ENCODE measurements at regions of chr22 and their contacts with region 1.

Region 1: GRCh38 chr22:32781695-32782094 is 19.8 kb upstream of the TIMP3 start:
- DNase-seq: no peak
- H3K4me3 ChIP-seq: no peak overlapping the region
- H3K27ac ChIP-seq: no peak overlapping the region
- H3K4me1 ChIP-seq: peaks cover 2% of the 10 kb centered on the region
- H3K27me3 ChIP-seq: no peaks in the 10 kb centered on the region
- CTCF ChIP-seq: no peak

Region 2: DNA sequence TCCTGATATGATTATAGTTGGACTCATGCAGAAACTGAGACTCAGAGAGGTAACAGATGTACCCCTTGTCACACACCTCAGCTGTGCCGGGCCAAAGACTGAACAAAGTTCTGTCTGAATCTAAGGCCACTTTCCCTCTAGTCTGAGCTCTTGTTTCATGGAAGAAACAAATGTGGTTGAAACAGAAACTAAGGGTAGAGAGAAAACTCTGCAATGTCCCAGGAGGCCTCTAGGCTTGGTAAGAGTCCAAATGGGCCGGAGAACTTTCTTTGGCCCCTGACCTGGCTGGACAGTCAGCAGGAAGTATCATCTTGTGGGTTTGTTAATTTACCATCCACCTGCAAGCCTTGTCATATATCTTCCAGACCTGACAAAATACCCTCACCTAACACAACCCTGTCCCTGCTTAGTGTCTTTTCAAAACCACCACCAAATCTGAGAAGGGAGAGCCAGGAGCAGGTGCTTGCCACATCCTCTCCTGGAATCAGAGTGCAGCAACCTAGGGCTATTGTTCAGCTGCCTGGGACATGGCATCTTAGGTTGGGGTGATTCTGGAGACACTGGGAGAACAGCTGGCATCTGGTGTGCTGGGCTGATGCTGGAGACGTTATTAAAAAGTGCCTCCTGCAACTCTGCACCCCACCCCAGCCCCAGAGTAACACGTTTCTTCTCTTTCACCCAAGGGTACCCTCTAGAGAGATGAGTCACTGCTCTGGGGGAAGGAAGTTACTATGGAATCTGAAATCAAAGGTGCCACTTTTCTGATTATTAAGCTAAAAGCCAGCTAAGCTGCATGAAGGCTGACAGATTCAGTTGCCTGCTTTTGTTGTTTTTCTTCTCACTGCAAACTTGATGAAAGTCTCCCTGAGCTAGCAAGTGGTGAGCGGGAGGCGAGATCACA is 106.5 kb before region 1 on chr22:
- dilution Hi-C with region 1: no loop called
- DNase-seq: no peak
- H3K4me3 ChIP-seq: no peak overlapping the region
- H3K27ac ChIP-seq: no peak overlapping the region
- H3K4me1 ChIP-seq: peaks cover 4% of the 10 kb centered on the region
- H3K27me3 ChIP-seq: peaks cover 10% of the 10 kb centered on the region
- CTCF ChIP-seq: no peak

Region 3: DNA sequence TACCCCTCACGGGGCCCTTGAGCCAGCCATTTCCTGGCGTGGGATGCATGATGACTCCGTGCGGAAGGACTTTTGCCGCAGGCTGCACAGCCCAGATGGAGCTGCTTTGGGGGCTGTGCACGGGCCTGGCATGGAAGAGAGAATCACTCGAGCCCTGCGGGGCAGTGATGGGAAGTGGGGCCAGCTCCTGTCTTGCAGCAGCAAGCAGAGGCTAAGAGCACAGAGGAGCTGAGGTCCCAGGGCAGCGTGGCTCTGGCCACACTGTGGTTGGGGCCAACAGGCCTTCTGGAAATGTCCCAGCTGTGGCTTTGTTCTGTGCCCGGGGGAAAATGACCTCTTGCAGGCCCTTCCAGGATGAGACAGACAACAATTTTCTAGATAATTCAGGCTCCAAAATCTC is 72.9 kb before region 1 on chr22:
- dilution Hi-C with region 1: loop called (anchors 5 kb)
- DNase-seq: no peak
- H3K4me3 ChIP-seq: no peak overlapping the region
- H3K27ac ChIP-seq: no peak overlapping the region
- H3K4me1 ChIP-seq: no peaks in the 10 kb centered on the region
- H3K27me3 ChIP-seq: no peaks in the 10 kb centered on the region
- CTCF ChIP-seq: no peak

Region 4: DNA sequence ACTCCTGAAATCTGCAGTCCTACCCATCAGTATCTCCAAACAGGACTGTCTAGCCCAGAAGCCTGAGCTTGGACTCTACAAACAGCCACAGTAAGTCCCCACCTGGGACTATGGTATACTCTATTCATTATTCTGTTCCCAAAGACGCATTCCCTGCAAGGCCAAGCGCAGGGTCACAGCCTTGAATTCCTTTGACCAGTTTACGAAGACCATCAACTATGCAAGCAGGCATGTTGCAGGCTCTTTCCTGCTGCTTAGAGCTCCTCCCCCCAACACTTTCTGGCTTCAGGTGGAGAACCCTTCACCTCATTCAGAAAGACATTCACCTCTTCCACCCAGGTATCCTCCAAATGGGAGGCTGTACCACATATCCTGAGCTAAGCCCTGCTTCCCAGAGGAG is 82.3 kb after region 1 on chr22:
- dilution Hi-C with region 1: no loop called
- DNase-seq: no peak
- H3K4me3 ChIP-seq: no peak overlapping the region
- H3K27ac ChIP-seq: no peak overlapping the region
- H3K4me1 ChIP-seq: no peaks in the 10 kb centered on the region
- H3K27me3 ChIP-seq: no peaks in the 10 kb centered on the region
- CTCF ChIP-seq: no peak